GM10248 (cell line): ENCODE measurements at regions of chr21 and their contacts with region 1.

Region 1: GRCh38 chr21:17903029-17903806 is 84.1 kb upstream of the C21orf91 start:
- DNase-seq: peak; percentile 43
- CTCF ChIP-seq: no peak

Region 2: DNA sequence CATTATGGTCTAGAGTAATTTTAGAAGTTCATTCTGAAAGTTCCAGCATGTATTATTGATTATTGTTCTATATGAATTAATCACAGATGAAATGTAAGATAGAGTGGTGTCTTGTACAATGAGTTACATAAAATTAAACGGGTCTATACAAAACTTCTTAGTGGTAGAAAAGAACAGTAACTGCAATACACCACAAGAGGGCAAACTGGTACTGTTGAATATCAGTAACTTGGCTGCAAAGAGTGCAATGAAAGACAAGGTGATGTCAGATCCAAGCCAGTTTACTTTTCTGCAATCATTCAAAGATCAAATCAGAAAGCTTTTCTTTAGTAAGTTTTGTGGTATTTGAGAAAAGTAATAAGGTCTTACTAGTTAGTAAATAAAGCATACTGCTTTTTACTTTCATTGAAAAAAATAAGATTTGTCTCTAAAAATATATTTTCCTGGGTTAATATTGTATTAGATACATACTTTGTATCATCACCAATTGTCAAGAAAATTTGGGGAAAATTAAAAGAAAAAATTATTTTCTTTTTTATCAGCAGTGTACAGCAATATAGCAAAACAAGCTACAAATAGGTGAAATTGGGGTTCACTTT is 224.1 kb before region 1 on chr21:
- CTCF ChIA-PET with region 1: interaction called, 30 read pairs
- POLR2A ChIA-PET with region 1: no interaction called
- DNase-seq: peak; percentile 69
- CTCF ChIP-seq: peak; percentile 70

Region 3: DNA sequence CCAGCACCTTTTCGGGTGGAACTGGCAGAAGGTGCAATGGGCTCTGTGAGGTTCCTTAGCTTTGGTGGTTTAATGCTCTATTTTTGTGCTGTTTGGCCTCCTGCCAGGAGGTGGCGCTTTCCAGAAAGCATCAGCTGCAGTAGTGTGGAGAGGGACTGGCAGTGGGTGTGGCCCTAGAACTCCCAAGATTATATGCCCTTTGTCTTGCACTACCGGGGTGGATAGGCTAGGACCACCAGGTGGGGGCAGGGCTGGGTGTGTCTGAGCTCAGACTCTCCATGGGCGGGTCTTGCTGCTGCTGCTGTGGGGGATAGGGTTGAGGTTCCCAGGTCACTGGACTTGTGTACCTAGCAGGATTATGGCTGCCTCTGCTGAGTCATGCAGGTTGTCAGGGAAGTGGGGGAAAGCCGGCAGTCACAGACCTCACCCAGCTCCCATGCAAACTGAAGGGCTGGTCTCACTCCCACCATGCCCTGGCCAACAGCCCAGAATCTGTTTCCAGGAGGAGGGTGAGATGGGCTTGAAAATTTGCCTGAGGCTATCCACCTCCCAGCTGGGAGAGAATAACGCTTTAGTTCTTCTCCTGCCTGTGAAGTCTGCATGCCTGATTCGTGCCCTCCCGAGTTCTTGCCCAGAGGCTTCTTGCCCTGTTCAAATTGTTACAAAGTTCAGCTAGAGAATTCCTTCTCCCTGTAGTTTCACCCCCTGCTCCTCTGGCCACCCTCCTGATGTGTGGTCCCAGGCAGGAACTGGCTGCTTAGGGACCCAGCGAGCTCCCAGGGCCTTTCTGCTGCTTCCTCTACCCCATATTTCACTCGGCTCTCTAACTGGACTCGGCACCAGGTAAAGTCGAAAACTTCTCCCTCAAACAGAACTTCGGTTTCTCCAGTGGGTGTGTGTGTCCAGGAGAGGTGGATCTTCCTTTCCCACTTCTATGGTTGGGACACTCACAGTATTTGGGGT is 214.0 kb before region 1 on chr21:
- CTCF ChIA-PET with region 1: interaction called, 10 read pairs
- POLR2A ChIA-PET with region 1: no interaction called
- DNase-seq: no peak
- CTCF ChIP-seq: peak; percentile 13

Region 4: DNA sequence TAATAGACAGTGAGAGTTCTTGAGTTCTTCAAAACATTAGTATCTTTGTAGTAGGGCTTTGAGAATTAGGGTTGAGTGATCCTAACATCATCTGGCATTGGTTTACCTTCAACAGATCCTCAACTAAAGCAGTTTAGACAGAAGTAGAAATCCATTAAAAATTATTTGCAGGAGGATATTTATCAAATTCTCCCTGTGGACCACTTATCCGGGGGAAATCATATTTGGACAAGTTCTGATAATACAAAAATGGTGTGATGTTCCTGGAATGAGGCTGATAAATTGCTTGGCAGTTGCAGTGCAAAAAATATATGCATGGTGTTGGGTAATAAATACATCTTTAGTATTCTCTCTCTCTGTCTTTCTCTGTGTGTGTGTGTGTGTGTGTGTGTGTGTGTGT is 226.3 kb after region 1 on chr21:
- CTCF ChIA-PET with region 1: no interaction called
- POLR2A ChIA-PET with region 1: no interaction called
- DNase-seq: no peak
- CTCF ChIP-seq: no peak

Region 5: DNA sequence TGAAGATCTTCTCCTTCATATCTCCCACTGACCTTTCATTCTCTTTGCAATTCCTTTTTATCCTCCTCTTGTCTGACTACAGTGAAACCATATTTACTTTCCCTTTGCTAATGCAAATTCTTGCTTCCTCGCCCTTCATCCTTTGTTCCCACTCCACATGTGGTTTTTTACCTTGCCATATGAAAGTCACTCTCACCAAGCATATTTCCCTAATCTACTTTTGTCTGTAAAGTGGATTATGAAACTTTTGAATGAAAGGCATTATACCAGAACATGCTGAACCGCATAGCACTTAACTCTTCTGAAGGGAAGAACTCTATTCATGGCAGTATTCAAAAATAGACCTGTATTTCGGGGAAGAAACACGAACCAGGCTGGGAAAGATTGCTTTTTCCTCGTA is 508.3 kb after region 1 on chr21:
- CTCF ChIA-PET with region 1: no interaction called
- POLR2A ChIA-PET with region 1: no interaction called
- DNase-seq: no peak
- CTCF ChIP-seq: no peak